B cell (primary cell): ENCODE measurements at regions of chr7 and their contacts with region 1.

Region 1: DNA sequence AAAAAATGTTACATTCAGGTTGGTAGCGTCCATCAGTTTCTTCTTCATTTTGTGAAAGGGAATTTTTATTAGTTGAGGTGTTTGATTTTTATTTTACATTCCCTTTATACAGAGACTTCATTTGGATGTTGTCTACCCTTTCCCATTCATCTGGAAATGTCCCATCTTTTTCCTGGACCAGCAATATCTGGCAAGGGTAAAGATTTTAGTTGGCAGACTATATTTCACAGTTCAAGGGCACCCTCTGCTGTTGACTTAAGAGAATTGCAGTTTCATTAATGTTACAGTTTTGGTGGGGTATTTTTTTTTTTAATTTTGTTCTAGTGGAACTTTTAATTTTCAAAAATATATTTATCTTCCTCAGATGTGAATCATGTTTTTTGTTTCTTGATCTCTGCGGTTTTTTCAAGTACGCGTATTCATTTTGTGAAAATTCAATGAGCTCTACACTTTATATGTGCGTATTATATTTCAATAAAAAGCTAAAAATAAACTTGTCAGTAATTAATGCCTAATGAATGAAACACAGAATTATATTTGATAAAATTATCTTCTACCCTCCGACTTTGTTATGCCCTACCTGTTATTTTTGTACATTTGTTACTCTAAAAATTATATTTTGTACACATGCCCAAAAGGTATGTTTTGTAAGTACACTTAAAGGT is 97.9 kb upstream of the KLF14 start:
- DNase-seq: peak; percentile 58
- ATAC-seq: no peak
- H3K4me3 ChIP-seq: no peak overlapping the region
- H3K4me3 Mint-ChIP-seq: no peak overlapping the region
- H3K27ac ChIP-seq: no peak overlapping the region
- H3K27ac Mint-ChIP-seq: no peak overlapping the region
- H3K4me1 ChIP-seq: no peaks in the 10 kb centered on the region
- H3K4me1 Mint-ChIP-seq: no peaks in the 10 kb centered on the region
- H3K27me3 ChIP-seq: peaks cover 0 to 3% (median 0%) of the 10 kb centered on the region in 4 experiments
- H3K27me3 Mint-ChIP-seq: peaks cover 7% of the 10 kb centered on the region
- CTCF ChIP-seq: peak; percentile 94

Region 2: DNA sequence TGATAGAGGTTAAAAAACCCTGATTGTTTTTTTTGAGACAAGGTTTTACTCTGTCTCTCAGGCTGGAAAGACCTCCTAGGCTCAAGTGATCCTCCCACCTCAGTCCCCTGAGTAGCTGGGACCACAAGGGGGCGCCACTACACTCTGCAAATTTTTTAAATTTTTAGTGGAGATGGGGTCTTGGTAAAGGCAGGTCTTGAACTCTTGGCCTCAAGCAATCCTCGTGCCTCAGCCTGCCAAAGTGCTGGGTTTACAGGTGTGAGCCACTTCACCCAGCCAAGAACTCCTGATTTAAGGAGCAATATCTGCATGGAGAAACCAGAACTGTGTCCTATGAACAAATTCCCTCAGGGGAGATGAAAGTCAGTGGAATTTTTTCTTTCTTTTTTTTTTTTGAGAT is 768.9 kb before region 1 on chr7:
- CTCF ChIA-PET with region 1: interaction called, 16 read pairs
- POLR2A ChIA-PET with region 1: no interaction called
- intact Hi-C with region 1: loop called (anchors 1 kb)
- DNase-seq: peak; percentile 68
- ATAC-seq: peak; percentile 36
- H3K4me3 ChIP-seq: no peak overlapping the region
- H3K4me3 Mint-ChIP-seq: no peak overlapping the region
- H3K27ac ChIP-seq: no peak overlapping the region
- H3K27ac Mint-ChIP-seq: no peak overlapping the region
- H3K4me1 ChIP-seq: no peaks in the 10 kb centered on the region
- H3K4me1 Mint-ChIP-seq: no peaks in the 10 kb centered on the region
- H3K27me3 ChIP-seq: peaks cover 0 to 4% (median 0%) of the 10 kb centered on the region in 4 experiments
- H3K27me3 Mint-ChIP-seq: peaks cover 4% of the 10 kb centered on the region
- CTCF ChIP-seq: peak; percentile 75

Region 3: DNA sequence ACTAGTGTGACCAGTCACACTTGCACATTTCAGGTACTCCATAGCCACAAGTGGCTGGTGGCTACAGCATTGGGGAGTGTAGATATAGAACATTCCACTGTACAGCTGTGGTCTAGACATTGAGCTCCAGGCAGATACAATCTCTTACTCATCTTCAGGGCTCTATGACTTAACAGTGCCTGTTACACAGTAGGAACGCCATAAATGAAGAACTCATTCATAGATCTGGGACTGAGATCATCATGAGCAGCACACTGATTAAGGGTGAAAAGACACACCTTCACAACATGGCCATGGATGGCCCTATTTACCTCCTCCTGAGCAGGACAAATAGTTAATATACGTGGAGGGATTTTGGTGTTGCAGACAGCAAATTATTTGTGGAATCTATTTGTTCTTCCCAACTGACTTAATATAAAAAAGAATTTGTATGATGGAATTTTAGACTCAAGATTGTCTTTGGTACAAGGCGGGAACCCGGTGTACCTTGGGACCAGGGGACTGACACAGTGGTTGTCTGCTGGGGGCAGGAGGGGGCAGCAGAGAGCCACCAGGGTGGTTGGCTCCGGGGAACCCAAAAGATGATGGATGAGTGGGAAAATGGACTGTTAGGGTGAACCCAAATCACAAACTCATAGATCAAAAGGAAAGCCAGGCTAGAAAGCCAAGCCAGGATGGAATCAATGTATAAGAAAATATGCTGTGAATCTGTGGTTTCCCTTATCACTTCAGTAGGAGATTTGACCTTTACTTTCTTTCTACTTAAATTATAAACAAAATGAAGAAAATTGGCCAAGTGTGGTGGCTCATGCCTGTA is 589.5 kb before region 1 on chr7:
- CTCF ChIA-PET with region 1: no interaction called
- POLR2A ChIA-PET with region 1: no interaction called
- intact Hi-C with region 1: loop called (anchors 2 kb)
- DNase-seq: peak; percentile 25
- ATAC-seq: peak; percentile 28
- H3K4me3 ChIP-seq: no peak overlapping the region
- H3K4me3 Mint-ChIP-seq: no peak overlapping the region
- H3K27ac ChIP-seq: no peak overlapping the region
- H3K27ac Mint-ChIP-seq: no peak overlapping the region
- H3K4me1 ChIP-seq: no peaks in the 10 kb centered on the region
- H3K4me1 Mint-ChIP-seq: peaks cover 5% of the 10 kb centered on the region
- H3K27me3 ChIP-seq: no peaks in the 10 kb centered on the region
- H3K27me3 Mint-ChIP-seq: peaks cover 9% of the 10 kb centered on the region
- CTCF ChIP-seq: peak; percentile 64

Region 4: GRCh38 chr7:130649004-130649790 is 182.8 kb before region 1 on chr7:
- CTCF ChIA-PET with region 1: no interaction called
- POLR2A ChIA-PET with region 1: no interaction called
- intact Hi-C with region 1: no loop called
- DNase-seq: no peak
- ATAC-seq: no peak
- H3K4me3 ChIP-seq: no peak overlapping the region
- H3K4me3 Mint-ChIP-seq: peak overlapping the region; percentile 10
- H3K27ac ChIP-seq: no peak overlapping the region
- H3K27ac Mint-ChIP-seq: no peak overlapping the region
- H3K4me1 ChIP-seq: peaks cover 0 to 5% of the 10 kb centered on the region in 2 donors
- H3K4me1 Mint-ChIP-seq: peaks cover 10% of the 10 kb centered on the region
- H3K27me3 ChIP-seq: no peaks in the 10 kb centered on the region
- H3K27me3 Mint-ChIP-seq: no peaks in the 10 kb centered on the region
- CTCF ChIP-seq: no peak